ENCODE measurements at regions of chr11 and their contacts with region 1.

Region 1: GRCh38 chr11:102666331-102666957 is 39.1 kb downstream of the MMP27 start:
- DNase-seq: no peak
- H3K4me3 ChIP-seq: no peak overlapping the region
- H3K27me3 ChIP-seq: peaks cover 2% of the 10 kb centered on the region; the same call in 1 of the 2 replicates
- CTCF ChIP-seq: peak; percentile 89

Region 2: DNA sequence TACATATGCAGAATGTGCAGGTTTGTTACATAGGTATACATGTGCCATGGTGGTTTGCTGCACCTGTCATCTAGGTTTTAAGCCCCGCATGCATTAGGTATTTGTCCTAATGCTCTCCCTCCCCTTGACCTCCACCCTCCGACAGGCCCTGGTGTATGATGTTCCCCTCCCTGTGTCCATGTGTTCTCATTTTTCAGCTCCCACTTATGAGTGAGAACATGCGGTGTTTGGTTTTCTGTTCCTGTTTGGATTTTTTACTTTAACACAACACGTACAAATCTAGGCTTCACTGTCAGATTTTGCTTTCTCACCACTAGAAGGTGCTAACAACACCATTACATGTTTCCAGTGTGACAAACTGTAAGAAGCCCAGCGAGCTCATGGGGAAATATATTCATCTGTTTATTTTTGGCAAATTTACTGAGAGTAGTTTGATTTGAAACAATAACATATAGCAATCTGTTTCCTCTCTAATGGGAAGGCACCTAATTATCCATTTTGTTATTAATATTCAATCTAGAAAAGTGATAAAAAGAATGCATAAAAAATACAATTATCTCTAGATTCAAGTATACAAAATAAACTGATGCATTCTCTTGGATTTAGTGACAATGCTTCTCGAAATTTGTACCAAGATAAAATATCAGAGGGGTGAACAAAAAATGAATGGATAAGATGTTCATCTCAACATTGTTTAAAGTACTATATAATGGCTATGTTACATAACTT is 372.4 kb before region 1 on chr11:
- CTCF ChIA-PET with region 1: interaction called, 29 read pairs
- POLR2A ChIA-PET with region 1: no interaction called
- DNase-seq: no peak
- H3K4me3 ChIP-seq: no peak overlapping the region
- H3K27me3 ChIP-seq: no peaks in the 10 kb centered on the region
- CTCF ChIP-seq: peak; percentile 72

Region 3: DNA sequence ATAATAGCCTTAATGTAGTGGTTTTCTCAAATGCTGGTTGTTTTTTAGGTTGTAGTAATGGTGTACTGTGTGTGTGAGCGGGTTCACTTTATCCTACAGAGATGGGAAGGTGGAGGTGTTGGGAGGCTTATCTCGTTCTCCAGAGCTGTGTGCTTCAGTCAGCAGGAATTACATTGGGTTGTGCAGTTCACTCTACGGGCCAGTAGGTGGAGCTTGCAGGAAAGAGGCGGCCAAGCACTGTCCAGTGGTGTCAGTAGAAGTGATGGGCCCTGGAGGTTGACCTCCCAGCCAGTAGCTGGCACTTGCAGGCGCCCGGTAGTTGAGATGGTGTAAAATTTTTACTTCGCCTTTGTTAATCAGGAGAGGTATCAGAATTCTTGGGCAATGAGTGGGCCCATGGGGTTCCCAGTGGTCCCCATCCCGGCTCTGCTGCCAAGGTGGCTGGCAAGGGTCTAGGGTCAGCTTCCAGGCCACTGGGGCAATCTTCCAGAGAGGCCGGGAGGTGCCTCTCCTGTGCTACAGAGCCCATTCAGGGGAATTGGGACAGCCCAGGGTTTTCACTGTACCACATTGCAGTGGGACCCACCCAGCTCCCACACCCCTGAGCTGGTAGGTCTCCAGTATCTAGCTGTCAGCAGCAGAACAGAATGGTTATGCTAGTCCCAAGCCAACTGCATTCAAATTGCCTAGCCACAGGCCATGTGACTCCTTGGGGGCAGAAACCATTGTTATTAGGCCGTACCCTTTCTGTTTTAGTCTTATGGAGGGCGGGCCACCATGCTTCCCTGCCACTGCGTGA is 275.6 kb before region 1 on chr11:
- CTCF ChIA-PET with region 1: interaction called, 18 read pairs
- POLR2A ChIA-PET with region 1: no interaction called
- DNase-seq: no peak
- H3K4me3 ChIP-seq: no peak overlapping the region
- H3K27me3 ChIP-seq: no peaks in the 10 kb centered on the region
- CTCF ChIP-seq: peak; percentile 86

Region 4: GRCh38 chr11:102592634-102593581 is 73.5 kb before region 1 on chr11:
- CTCF ChIA-PET with region 1: interaction called, 21 read pairs
- POLR2A ChIA-PET with region 1: no interaction called
- DNase-seq: no peak
- H3K4me3 ChIP-seq: no peak overlapping the region
- H3K27me3 ChIP-seq: no peaks in the 10 kb centered on the region; the same call in 1 of the 2 replicates
- CTCF ChIP-seq: peak; percentile 64

Measured in BJ (cell line).